Prostate gland (tissue), 2 donors: ENCODE measurements at regions of chr1 and their contacts with region 1.

Region 1: DNA sequence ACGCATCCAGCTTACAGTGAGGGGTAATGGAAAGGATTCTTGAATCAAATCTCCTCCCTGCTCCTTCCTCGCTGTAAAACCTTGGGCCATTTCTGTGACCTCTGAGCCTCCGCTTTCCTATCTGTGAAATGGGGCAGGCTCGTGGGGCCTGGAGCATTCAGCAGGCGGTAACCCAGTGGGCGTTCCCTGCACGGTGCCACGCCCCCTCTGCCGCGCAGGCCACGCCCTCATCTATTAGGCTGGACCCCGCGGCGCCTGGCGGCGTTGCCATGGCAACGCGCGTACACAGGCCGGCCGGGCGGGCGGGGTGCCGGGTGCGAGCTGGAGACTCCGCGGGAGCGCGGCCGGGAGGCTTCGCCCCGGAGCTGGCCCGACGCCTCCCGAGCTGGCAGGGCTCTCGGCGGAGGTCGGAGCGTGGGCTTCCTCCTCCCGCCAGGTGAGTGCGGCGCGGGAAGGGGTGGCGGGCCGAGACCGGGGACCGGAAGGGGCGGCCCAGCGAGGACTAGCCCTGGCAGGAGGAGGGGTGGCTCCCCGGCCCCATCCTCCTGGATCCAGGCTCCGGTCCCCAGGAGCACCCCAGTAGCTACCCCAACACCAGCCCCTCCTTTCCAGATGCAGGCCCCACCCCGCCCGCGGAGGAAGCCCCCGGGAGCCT is at the start of gene FHAD1:
- DNase-seq: peak; percentile 32
- H3K4me3 ChIP-seq: peak within 1 kb of the TSS; percentile 37 to 41
- H3K27ac ChIP-seq: peak within 1 kb of the TSS in 1 of 2 donors; percentile 14
- H3K4me1 ChIP-seq: no peaks in the 10 kb centered on the region
- H3K27me3 ChIP-seq: no peaks in the 10 kb centered on the region
- CTCF ChIP-seq: no peak
- POLR2A ChIP-seq: no peak
- total RNA-seq, gene FHAD1: 0.27 to 6.5 TPM

Region 2: GRCh38 chr1:15090373-15090772 is 156.7 kb before region 1 on chr1:
- intact Hi-C with region 1: no loop called
- DNase-seq: peak; percentile 76
- H3K4me3 ChIP-seq: no peak overlapping the region
- H3K27ac ChIP-seq: peak overlapping the region in 1 of 2 donors; percentile 8
- H3K4me1 ChIP-seq: peaks cover 20% of the 10 kb centered on the region
- H3K27me3 ChIP-seq: no peaks in the 10 kb centered on the region
- CTCF ChIP-seq: no peak
- POLR2A ChIP-seq: peak; percentile 30

Region 3: GRCh38 chr1:15214527-15214926 is 32.6 kb before region 1 on chr1:
- intact Hi-C with region 1: loop called (anchors 5 kb)
- DNase-seq: no peak
- H3K4me3 ChIP-seq: no peak overlapping the region
- H3K27ac ChIP-seq: peak overlapping the region; percentile 53 to 59
- H3K4me1 ChIP-seq: no peaks in the 10 kb centered on the region
- H3K27me3 ChIP-seq: no peaks in the 10 kb centered on the region
- CTCF ChIP-seq: no peak
- POLR2A ChIP-seq: no peak

Region 4: GRCh38 chr1:15296602-15297321 is 49.7 kb after region 1 on chr1:
- intact Hi-C with region 1: no loop called
- DNase-seq: no peak
- H3K4me3 ChIP-seq: no peak overlapping the region
- H3K27ac ChIP-seq: no peak overlapping the region
- H3K4me1 ChIP-seq: no peaks in the 10 kb centered on the region
- H3K27me3 ChIP-seq: no peaks in the 10 kb centered on the region
- CTCF ChIP-seq: no peak
- POLR2A ChIP-seq: no peak